BJ (cell line): ENCODE measurements at regions of chr5 and their contacts with region 1.

Region 1: DNA sequence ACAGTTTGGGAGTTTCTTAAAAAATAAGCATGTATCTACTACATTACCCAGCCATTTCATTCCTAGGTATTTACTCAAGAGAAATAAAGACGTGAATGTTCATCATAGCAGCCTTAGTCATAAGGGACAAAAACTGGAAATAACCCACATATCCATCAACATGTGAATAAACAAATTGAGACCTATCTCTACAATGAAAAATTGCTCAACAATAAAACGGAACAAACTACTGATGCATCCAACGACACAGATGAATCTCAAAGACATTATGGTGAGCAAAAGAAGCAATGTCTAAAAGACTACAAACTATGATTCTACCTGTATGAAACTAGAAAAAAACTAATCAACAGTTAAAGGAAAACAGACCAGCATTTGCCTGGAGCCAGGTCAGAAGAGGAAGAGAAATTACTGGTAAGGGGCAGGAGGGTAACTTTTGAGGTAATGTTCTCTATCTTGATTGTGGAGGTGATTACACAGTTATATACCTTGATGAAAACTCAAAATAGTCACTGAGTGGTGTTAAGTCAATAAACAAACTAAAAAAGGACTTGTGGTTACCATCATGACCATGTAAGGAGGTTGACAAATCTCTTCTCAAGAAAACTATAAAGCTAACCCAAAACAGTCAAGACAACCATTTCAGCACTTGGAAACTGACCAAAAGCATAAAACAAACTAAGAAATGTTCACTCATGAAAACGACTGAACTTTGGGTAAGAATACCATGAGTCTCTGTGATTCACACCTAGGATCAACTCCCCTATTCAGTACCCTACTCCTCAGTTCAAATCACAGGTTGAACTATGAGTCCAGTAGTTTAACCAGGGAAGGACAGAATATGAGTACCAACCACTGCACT is 10.5 kb downstream of the UIMC1 start:
- DNase-seq: peak; percentile 55
- H3K4me3 ChIP-seq: no peak overlapping the region
- H3K27me3 ChIP-seq: no peaks in the 10 kb centered on the region
- CTCF ChIP-seq: no peak

Region 2: DNA sequence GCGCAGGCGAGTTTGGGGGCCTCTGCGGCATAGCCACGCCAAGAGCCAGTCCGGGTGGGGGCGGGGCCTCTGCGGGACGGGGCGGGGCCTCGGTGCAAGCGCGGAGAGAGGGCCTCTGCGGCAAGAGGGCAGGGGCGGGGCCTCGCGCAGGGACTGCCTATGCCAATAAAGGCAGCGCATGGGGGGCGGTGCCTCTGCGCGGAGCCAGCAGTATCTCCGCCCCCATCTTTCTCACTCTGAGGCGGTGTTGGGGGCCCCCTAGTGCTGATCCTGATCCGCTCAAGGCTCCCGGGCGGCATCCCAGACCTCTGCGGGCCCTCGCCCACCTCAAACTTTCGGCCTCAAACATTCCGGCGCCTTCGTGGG is 376.9 kb before region 1 on chr5:
- CTCF ChIA-PET with region 1: no interaction called
- POLR2A ChIA-PET with region 1: no interaction called
- DNase-seq: peak; percentile 14
- H3K4me3 ChIP-seq: no peak overlapping the region
- H3K27me3 ChIP-seq: peaks cover 27% of the 10 kb centered on the region
- CTCF ChIP-seq: peak; percentile 54

Region 3: DNA sequence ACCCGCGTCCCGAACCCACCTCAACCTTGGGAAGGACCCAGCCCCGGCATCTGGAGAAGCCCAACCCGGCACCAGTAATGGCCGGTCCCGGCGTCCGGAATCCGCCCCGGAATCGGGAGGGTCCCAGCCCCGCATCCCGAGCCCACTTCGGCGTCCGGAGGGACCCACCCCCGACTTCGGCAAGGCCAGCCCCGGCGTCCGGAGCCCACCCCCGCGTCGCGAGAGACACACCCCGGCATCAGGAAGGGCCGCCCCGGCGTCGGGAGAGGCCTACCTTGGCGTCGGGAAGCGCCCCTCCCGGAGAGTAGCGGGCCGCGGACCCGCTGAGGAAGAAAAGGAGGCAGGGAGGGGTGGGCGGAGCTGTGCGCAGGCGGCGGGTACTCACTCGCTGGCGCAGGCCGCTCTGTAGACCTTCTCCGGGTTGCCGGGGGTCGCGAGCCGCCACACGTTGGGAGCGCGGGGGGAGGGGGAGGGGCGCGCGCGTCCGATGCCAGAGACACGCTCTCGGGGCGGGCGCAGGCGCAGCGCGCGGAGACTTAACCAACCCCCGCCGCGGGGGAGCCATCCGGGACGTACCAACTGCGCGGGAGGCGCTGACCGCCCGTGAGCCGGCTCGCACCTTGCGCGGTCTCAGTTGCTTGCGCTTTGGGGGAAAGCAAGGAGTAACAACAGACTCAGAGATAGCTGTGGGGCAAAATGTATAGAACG is 10.3 kb after region 1 on chr5 and contains the start of gene UIMC1:
- CTCF ChIA-PET with region 1: interaction called, 11 read pairs
- POLR2A ChIA-PET with region 1: no interaction called
- DNase-seq: no peak
- H3K4me3 ChIP-seq: peak within 1 kb of the TSS; percentile 97
- H3K27me3 ChIP-seq: no peaks in the 10 kb centered on the region
- CTCF ChIP-seq: no peak
- polyA plus RNA-seq, gene UIMC1: 14.1 and 20.1 TPM in 2 replicates